CD4-positive, alpha-beta T cell (primary cell): ENCODE measurements at regions of chr12 and their contacts with region 1.

Region 1: DNA sequence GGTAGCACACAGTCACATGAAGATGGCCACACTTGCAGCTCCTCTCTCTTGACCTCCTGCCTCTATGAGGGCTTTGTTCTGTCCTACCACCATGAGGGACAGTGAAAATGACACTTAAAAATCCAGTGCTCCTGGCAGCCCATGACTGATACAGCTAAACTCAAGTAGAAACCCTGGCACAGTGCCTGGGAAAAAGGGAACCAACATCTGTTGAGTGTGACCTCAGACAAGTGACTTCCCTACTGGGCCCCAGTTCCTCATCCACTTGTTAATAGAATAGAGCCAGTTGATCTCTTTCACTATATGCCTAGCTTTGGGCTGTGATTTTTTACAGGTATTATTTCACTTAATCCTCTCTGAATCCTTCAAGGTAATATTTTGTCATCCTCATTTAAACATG is 4.8 kb downstream of the GUCY2C start:
- DNase-seq: peak in 3 of 14 experiments; percentile 20 to 64 (median 55)
- ATAC-seq: no peak
- H3K4me3 ChIP-seq: no peak overlapping the region
- H3K4me3 Mint-ChIP-seq: no peak overlapping the region
- H3K27ac ChIP-seq: no peak overlapping the region
- H3K27ac Mint-ChIP-seq: no peak overlapping the region
- H3K4me1 ChIP-seq: no peaks in the 10 kb centered on the region
- H3K4me1 Mint-ChIP-seq: no peaks in the 10 kb centered on the region
- H3K27me3 ChIP-seq: no peaks in the 10 kb centered on the region
- H3K27me3 Mint-ChIP-seq: no peaks in the 10 kb centered on the region
- CTCF ChIP-seq: no peak

Region 2: DNA sequence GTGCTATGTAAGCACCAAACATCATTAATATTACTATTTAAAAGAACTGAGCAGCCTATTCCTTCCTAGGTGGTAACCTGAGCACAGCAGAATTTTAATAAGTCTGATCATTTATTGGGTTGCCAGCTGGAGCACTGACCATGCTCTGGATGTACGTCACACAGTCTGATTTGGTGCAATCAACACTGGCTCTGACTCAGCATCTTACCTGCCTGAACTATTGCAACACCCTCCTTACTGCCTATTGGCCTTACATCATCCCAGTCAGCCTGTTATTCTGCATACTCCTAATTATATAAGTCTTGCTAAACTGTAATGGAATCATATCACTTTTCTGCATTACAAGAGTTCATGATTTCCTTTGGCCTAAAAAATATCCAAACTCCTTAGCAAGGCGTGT is 780.5 kb after region 1 on chr12:
- CTCF ChIA-PET with region 1: no interaction called
- POLR2A ChIA-PET with region 1: no interaction called
- intact Hi-C with region 1: loop called in 1 of 2 experiments (anchors 5 kb)
- DNase-seq: no peak
- ATAC-seq: no peak
- H3K4me3 ChIP-seq: no peak overlapping the region
- H3K4me3 Mint-ChIP-seq: no peak overlapping the region
- H3K27ac ChIP-seq: no peak overlapping the region
- H3K27ac Mint-ChIP-seq: no peak overlapping the region
- H3K4me1 ChIP-seq: no peaks in the 10 kb centered on the region
- H3K4me1 Mint-ChIP-seq: no peaks in the 10 kb centered on the region
- H3K27me3 ChIP-seq: peaks cover 0 to 4% of the 10 kb centered on the region in 2 experiments
- H3K27me3 Mint-ChIP-seq: peaks cover 41% of the 10 kb centered on the region
- CTCF ChIP-seq: no peak